ENCODE measurements at regions of chr20 and their contacts with region 1.

Region 1: GRCh38 chr20:46752728-46753127 is 43.3 kb downstream of the SLC2A10 start:
- DNase-seq: peak; percentile 33 to 69
- ATAC-seq: peak; percentile 54 to 69; a peak in 4 of 6 replicates
- H3K4me3 ChIP-seq: no peak overlapping the region
- H3K27ac ChIP-seq: peak overlapping the region; percentile 29 to 44; a peak in 5 of 6 replicates
- H3K4me1 ChIP-seq: peaks cover 5% of the 10 kb centered on the region; the same call in 2 of the 3 replicates
- CTCF ChIP-seq: peak; percentile 84
- EP300 ChIP-seq: no peak
- POLR2A ChIP-seq: no peak
- RAD21 ChIP-seq: peak; percentile 85 to 89

Region 2: GRCh38 chr20:46767127-46767761 is 14.5 kb after region 1 on chr20:
- CTCF ChIA-PET with region 1: interaction called, 62 read pairs
- POLR2A ChIA-PET with region 1: no interaction called
- DNase-seq: peak; percentile 61 to 65
- ATAC-seq: peak; percentile 78 to 89; a peak in 5 of 6 replicates
- H3K4me3 ChIP-seq: no peak overlapping the region
- H3K27ac ChIP-seq: no peak overlapping the region
- H3K4me1 ChIP-seq: peaks cover 5% of the 10 kb centered on the region; the same call in 1 of the 3 replicates
- CTCF ChIP-seq: peak; percentile 81
- EP300 ChIP-seq: no peak
- POLR2A ChIP-seq: no peak
- RAD21 ChIP-seq: peak; percentile 66 to 70

Region 3: GRCh38 chr20:46772901-46773300 is 20.2 kb after region 1 on chr20:
- CTCF ChIA-PET with region 1: interaction called, 62 read pairs
- POLR2A ChIA-PET with region 1: no interaction called
- DNase-seq: peak in 1 of 2 experiments; percentile 20
- ATAC-seq: peak in 1 of 2 experiments; percentile 61; a peak in 3 of 6 replicates
- H3K4me3 ChIP-seq: no peak overlapping the region
- H3K27ac ChIP-seq: no peak overlapping the region
- H3K4me1 ChIP-seq: peaks cover 9% of the 10 kb centered on the region; the same call in 1 of the 3 replicates
- CTCF ChIP-seq: peak; percentile 36; the same call in 1 of the 3 replicates
- EP300 ChIP-seq: no peak
- POLR2A ChIP-seq: no peak
- RAD21 ChIP-seq: peak; percentile 47 to 60; a peak in 4 of 5 replicates